ENCODE measurements at regions of chr3 and their contacts with region 1.

Region 1: GRCh38 chr3:23740517-23740965 is 65.2 kb upstream of the UBE2E1 start:
- DNase-seq: peak; percentile 72 to 91
- H3K4me3 ChIP-seq: peak overlapping the region; percentile 54
- H3K27ac ChIP-seq: peak overlapping the region; percentile 100
- H3K4me1 ChIP-seq: peaks cover 74% of the 10 kb centered on the region
- H3K27me3 ChIP-seq: no peaks in the 10 kb centered on the region
- CTCF ChIP-seq: no peak

Region 2: GRCh38 chr3:23501201-23501802 is 239.2 kb before region 1 on chr3:
- CTCF ChIA-PET with region 1: no interaction called
- POLR2A ChIA-PET with region 1: no interaction called
- intact Hi-C with region 1: no loop called
- DNase-seq: no peak
- H3K4me3 ChIP-seq: no peak overlapping the region
- H3K27ac ChIP-seq: no peak overlapping the region
- H3K4me1 ChIP-seq: no peaks in the 10 kb centered on the region
- H3K27me3 ChIP-seq: no peaks in the 10 kb centered on the region
- CTCF ChIP-seq: no peak

Region 3: DNA sequence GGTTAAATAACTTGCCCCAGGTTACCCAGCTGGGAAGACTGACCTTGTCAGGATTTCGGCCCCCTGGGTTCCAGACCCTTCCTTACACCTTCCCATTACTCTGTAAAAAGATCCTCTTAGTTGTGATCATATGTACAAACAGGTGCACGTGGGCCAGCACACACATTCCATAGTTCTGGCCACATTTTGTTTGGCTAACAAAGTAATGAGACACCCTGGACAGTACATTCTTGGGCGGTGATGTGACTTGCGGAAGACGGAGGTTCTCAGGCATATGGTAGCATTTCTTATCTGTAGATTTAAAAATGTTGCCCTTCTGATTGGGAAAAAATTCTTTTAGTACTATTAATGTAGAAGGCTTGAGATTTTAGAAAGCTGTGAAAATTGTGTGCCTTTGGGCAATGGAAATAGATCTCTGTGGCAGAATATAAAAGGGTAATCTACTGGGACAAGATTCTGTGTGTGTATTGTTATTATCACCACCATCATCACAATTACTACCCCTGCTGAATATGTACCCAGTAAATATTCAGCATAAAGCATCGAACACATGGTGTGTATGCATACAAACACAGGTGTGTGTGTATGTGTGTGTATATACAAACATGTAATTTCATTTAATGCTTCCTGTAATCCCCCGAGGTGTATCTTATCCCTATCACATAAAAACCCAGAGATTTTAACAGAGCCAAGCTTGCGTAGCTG is 140.2 kb before region 1 on chr3:
- CTCF ChIA-PET with region 1: no interaction called
- POLR2A ChIA-PET with region 1: no interaction called
- intact Hi-C with region 1: loop called (anchors 1 kb)
- DNase-seq: peak; percentile 69 to 90
- H3K4me3 ChIP-seq: no peak overlapping the region
- H3K27ac ChIP-seq: peak overlapping the region; percentile 79
- H3K4me1 ChIP-seq: peaks cover 22% of the 10 kb centered on the region
- H3K27me3 ChIP-seq: no peaks in the 10 kb centered on the region
- CTCF ChIP-seq: no peak

Region 4: DNA sequence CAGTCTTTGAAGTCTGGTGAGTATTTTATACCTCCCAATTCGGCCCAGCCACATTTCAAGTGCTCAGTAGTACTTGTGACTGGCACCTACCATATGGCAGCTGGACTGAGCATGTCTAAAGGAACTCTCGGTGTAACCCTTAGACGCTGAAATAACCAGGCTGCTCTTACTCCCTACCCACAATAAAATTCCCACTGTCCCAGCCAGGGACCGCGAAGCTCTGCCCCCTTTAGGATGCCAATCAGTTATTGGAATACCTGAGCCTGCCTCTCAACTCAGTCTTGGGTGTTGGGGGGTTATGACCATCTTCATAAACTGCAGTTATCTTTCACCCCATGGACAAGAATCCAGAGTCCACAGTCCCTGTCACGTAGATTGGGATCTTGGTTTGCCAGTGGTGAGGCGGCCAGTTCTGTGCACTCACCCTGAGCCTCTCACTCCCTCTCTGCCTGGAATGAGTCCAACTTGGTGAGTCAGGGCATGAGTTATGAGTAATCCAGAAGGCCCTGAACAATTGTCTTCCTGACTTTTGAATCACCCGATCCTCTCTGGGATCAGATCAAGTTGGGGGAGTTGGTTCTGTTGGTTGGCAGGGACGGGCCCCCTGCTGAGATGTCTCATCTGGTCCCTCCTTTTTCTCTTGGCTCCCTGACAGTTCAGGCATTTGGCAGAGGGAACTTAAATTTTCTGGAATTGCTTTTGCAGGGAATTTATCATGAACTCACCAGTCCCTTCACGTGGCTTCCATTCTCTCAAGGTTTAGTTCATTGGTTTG is 54.9 kb before region 1 on chr3:
- CTCF ChIA-PET with region 1: no interaction called
- POLR2A ChIA-PET with region 1: no interaction called
- intact Hi-C with region 1: loop called (anchors 1 kb)
- DNase-seq: peak; percentile 91 to 96
- H3K4me3 ChIP-seq: no peak overlapping the region
- H3K27ac ChIP-seq: peak overlapping the region; percentile 82
- H3K4me1 ChIP-seq: peaks cover 26% of the 10 kb centered on the region
- H3K27me3 ChIP-seq: no peaks in the 10 kb centered on the region
- CTCF ChIP-seq: no peak

Region 5: GRCh38 chr3:23805633-23806533 is 65.3 kb after region 1 on chr3 and contains the start of gene UBE2E1:
- CTCF ChIA-PET with region 1: no interaction called
- POLR2A ChIA-PET with region 1: no interaction called
- intact Hi-C with region 1: loop called (anchors 1 kb)
- DNase-seq: peak in 1 of 2 experiments; percentile 54
- H3K4me3 ChIP-seq: peak within 1 kb of the TSS; percentile 97
- H3K27ac ChIP-seq: peak within 1 kb of the TSS; percentile 87
- H3K4me1 ChIP-seq: peaks cover 56% of the 10 kb centered on the region
- H3K27me3 ChIP-seq: no peaks in the 10 kb centered on the region
- CTCF ChIP-seq: no peak
- total RNA-seq, gene UBE2E1: 65.6 and 102 TPM in 2 replicates

Region 6: DNA sequence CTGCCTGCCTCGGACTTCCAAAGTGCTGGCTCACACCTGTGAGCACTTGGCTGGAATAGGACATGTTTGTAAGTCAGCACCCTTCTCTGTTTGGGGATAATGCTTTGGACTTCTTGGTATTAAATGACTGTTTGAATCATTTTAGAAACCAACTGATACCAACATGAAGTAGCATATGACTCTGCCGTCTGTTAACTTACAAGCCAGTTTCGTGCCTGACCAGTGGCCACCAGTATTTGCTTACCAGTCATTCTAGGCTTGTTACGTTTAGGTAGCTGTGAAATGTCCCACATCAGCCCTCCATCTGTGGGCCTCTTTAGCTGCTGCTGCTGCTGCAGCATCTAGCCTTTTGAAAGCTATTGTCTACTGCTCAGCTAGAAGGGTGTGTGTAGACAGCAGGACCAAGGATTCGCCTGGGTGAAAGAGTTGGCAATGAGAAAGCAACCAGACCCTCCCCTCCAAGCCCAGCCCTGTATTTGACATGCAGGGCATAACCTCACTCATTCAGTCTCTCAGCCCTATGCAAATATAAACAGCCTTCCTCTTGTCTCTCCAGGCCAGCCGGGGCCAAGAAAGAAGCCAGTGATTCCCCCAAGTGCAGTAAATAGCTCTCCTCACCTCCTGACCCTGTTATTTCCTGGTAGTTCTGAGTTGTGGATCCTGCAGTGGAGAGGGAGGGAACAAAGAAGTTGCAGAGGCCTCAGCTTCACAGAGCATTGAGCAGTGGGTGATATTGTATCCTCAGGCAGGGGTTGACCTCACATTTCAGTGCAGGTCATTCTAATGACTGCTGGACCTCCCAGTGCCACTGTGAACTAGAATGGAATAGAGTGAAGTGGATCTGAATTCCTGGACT is 125.3 kb after region 1 on chr3:
- CTCF ChIA-PET with region 1: no interaction called
- POLR2A ChIA-PET with region 1: no interaction called
- intact Hi-C with region 1: loop called (anchors 2 kb)
- DNase-seq: peak; percentile 52 to 54
- H3K4me3 ChIP-seq: no peak overlapping the region
- H3K27ac ChIP-seq: peak overlapping the region; percentile 30; the same call in 1 of the 2 replicates
- H3K4me1 ChIP-seq: peaks cover 30% of the 10 kb centered on the region
- H3K27me3 ChIP-seq: no peaks in the 10 kb centered on the region
- CTCF ChIP-seq: no peak

Region 7: GRCh38 chr3:23981955-23982354 is 241.4 kb after region 1 on chr3:
- CTCF ChIA-PET with region 1: no interaction called
- POLR2A ChIA-PET with region 1: no interaction called
- intact Hi-C with region 1: no loop called
- DNase-seq: no peak
- H3K4me3 ChIP-seq: no peak overlapping the region
- H3K27ac ChIP-seq: no peak overlapping the region
- H3K4me1 ChIP-seq: no peaks in the 10 kb centered on the region
- H3K27me3 ChIP-seq: no peaks in the 10 kb centered on the region
- CTCF ChIP-seq: no peak